CD8-positive, alpha-beta memory T cell (primary cell): ENCODE measurements at regions of chr6 and their contacts with region 1.

Region 1: DNA sequence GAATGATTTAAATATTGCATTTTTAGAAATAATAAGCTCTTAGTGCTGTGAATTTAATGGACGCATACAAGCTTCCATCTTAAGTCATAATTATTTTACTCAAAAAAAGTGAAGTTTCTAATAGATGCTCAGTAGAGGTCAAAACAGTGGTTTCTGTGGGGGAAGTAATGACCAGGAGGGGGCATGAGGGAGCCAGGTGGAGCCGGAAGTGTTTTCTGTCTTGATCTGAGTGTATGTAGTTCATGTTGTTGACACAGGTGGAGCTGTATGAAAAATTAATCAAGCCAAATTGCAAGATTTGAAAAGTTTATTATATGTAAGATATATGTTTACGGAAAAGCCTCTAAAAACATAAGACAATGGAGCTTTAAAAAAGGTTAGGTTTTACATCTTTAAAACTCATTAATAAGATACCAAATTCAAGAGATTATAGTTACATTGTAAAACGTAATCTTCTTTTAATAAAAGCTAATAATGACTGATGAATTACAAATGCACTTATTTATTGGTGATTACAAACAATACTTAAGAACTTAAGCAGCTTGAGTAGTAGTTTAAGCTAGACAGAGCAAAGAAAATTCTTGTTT is 68.0 kb downstream of the PLAGL1 start:
- DNase-seq: peak; percentile 20 to 71 (median 45)
- H3K4me3 ChIP-seq: no peak overlapping the region
- H3K4me3 Mint-ChIP-seq: no peak overlapping the region
- H3K27ac ChIP-seq: no peak overlapping the region
- H3K27ac Mint-ChIP-seq: peak overlapping the region in 1 of 8 donors; percentile 12
- H3K4me1 ChIP-seq: peaks cover 4% of the 10 kb centered on the region
- H3K4me1 Mint-ChIP-seq: peaks cover 5 to 13% (median 11%) of the 10 kb centered on the region in 3 donors
- H3K27me3 ChIP-seq: peaks cover 3% of the 10 kb centered on the region
- H3K27me3 Mint-ChIP-seq: peaks cover 4 to 11% of the 10 kb centered on the region in 2 donors

Region 2: GRCh38 chr6:143575440-143575839 is 364.7 kb before region 1 on chr6:
- CTCF ChIA-PET with region 1: interaction called, 12 read pairs
- POLR2A ChIA-PET with region 1: no interaction called
- DNase-seq: peak in 4 of 5 donors; percentile 40 to 63 (median 54)
- H3K4me3 ChIP-seq: no peak overlapping the region
- H3K4me3 Mint-ChIP-seq: no peak overlapping the region
- H3K27ac ChIP-seq: no peak overlapping the region
- H3K27ac Mint-ChIP-seq: peak overlapping the region in 5 of 8 donors; percentile 5 to 66 (median 41)
- H3K4me1 ChIP-seq: no peaks in the 10 kb centered on the region
- H3K4me1 Mint-ChIP-seq: peaks cover 24 to 52% (median 38%) of the 10 kb centered on the region in 3 donors
- H3K27me3 ChIP-seq: no peaks in the 10 kb centered on the region
- H3K27me3 Mint-ChIP-seq: peaks cover 0 to 2% of the 10 kb centered on the region in 2 donors

Region 3: DNA sequence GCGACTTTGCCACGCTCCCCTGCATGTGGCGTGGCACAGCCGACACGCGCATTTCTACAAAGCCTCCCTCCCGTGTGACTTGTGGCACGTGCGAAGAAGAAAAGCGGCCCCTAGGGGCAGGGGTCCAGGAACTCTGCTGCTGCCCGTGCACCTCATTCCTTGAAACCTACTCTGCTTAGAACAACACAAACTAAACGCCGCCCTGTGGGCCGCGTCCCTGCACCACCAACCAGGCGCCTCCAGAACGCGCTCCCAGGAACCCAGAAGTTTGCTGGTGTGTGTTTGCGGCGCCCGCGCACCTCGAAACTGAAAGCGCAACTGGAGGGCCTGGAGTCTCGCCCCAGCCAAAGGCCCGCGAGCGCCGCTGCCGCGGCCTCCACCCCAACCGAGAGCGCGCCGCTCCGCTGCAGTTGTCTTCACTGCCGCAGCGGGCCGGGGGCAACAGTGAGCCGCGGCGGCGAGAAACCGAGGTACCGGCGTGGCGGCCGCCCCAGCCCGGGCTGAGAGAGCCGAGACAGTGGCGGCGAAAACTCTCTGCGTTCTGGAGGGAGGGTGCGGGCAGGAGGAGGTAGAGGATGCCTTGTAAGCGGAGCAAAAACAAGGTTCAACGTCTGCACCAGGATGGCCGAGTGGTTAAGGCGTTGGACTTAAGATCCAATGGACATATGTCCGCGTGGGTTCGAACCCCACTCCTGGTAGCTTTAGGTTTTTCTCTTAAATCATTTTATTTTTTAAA is 276.0 kb after region 1 on chr6:
- CTCF ChIA-PET with region 1: interaction called, 15 read pairs
- POLR2A ChIA-PET with region 1: no interaction called
- DNase-seq: peak; percentile 83 to 94 (median 94)
- H3K4me3 ChIP-seq: peak overlapping the region; percentile 89
- H3K4me3 Mint-ChIP-seq: peak overlapping the region; percentile 88 to 99 (median 96)
- H3K27ac ChIP-seq: peak overlapping the region; percentile 85
- H3K27ac Mint-ChIP-seq: peak overlapping the region; percentile 89 to 100 (median 98)
- H3K4me1 ChIP-seq: peaks cover 30% of the 10 kb centered on the region
- H3K4me1 Mint-ChIP-seq: peaks cover 39 to 46% (median 44%) of the 10 kb centered on the region in 3 donors
- H3K27me3 ChIP-seq: no peaks in the 10 kb centered on the region
- H3K27me3 Mint-ChIP-seq: peaks cover 2 to 17% of the 10 kb centered on the region in 2 donors